Calu3 (cell line): ENCODE measurements at regions of chr5 and their contacts with region 1.

Region 1: GRCh38 chr5:120988941-120989340 is 524.8 kb downstream of the PRR16 start:
- DNase-seq: no peak
- H3K4me3 Mint-ChIP-seq: no peak overlapping the region
- H3K27ac Mint-ChIP-seq: no peak overlapping the region
- H3K4me1 Mint-ChIP-seq: no peaks in the 10 kb centered on the region
- H3K27me3 Mint-ChIP-seq: no peaks in the 10 kb centered on the region
- CTCF ChIP-seq: no peak

Region 2: GRCh38 chr5:120684749-120685415 is 304.1 kb before region 1 on chr5:
- CTCF ChIA-PET with region 1: no interaction called
- intact Hi-C with region 1: no loop called
- DNase-seq: peak; percentile 24
- H3K4me3 Mint-ChIP-seq: no peak overlapping the region
- H3K27ac Mint-ChIP-seq: no peak overlapping the region
- H3K4me1 Mint-ChIP-seq: peaks cover 42% of the 10 kb centered on the region
- H3K27me3 Mint-ChIP-seq: no peaks in the 10 kb centered on the region
- CTCF ChIP-seq: no peak

Region 3: GRCh38 chr5:121239951-121240350 is 251.0 kb after region 1 on chr5:
- CTCF ChIA-PET with region 1: no interaction called
- intact Hi-C with region 1: no loop called
- DNase-seq: no peak
- H3K4me3 Mint-ChIP-seq: no peak overlapping the region
- H3K27ac Mint-ChIP-seq: no peak overlapping the region
- H3K4me1 Mint-ChIP-seq: no peaks in the 10 kb centered on the region
- H3K27me3 Mint-ChIP-seq: no peaks in the 10 kb centered on the region
- CTCF ChIP-seq: no peak

Region 4: DNA sequence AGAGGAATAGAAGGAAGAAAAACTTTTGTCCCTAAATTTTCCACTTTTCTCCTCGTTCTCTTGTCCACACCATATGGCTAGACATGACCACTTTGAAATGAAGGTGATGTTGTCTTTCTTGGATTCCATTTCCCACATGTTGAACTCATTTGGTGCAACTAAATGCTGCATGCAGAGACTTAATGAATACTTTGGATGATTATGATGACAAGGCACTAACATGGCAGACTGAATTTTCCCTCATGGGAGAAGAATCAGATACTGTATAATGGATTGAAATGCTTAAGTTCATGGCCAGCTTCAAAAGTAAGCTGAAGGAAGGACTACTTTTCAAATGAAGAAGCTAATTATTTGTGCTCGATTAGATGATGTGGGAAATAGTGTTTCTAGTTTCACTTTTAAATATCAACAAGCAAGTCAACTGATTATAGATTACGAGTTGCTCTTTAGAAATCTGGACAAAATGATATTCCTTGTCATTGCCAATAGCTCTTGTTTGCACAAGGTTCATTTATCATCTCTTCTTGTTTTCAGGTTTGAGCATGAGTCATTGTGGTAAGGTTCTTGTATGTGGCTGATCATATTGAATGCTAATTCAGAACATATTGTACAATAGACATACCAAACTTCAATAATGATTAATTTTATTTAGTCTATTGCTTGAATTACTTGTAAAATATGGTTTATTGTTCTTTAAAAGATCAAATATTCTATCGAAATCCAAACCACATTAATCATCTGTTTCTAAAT is 361.4 kb after region 1 on chr5:
- CTCF ChIA-PET with region 1: no interaction called
- intact Hi-C with region 1: loop called (anchors 5 kb)
- DNase-seq: no peak
- H3K4me3 Mint-ChIP-seq: no peak overlapping the region
- H3K27ac Mint-ChIP-seq: no peak overlapping the region
- H3K4me1 Mint-ChIP-seq: no peaks in the 10 kb centered on the region
- H3K27me3 Mint-ChIP-seq: no peaks in the 10 kb centered on the region
- CTCF ChIP-seq: no peak